ENCODE measurements at regions of chr11 and their contacts with region 1.

Region 1: GRCh38 chr11:60970369-60970774 is 1.1 kb upstream of the CD6 start:
- DNase-seq: peak; percentile 78 to 82 (median 80)
- H3K4me3 ChIP-seq: peak overlapping the region; percentile 38 to 92
- H3K4me3 Mint-ChIP-seq: peak overlapping the region; percentile 93 to 98 (median 96)
- H3K27ac ChIP-seq: peak overlapping the region; percentile 92
- H3K27ac Mint-ChIP-seq: peak overlapping the region; percentile 88 to 98 (median 96)
- H3K4me1 ChIP-seq: peaks cover 23% of the 10 kb centered on the region
- H3K4me1 Mint-ChIP-seq: peaks cover 18 to 38% (median 24%) of the 10 kb centered on the region in 4 donors
- H3K27me3 ChIP-seq: no peaks in the 10 kb centered on the region
- H3K27me3 Mint-ChIP-seq: peaks cover 0 to 1% of the 10 kb centered on the region in 2 donors

Region 2: GRCh38 chr11:60831143-60831500 is 139.2 kb before region 1 on chr11:
- CTCF ChIA-PET with region 1: interaction called, 18 read pairs
- POLR2A ChIA-PET with region 1: no interaction called
- intact Hi-C with region 1: no loop called
- DNase-seq: peak; percentile 68 to 77 (median 73)
- H3K4me3 ChIP-seq: no peak overlapping the region
- H3K4me3 Mint-ChIP-seq: peak overlapping the region in 2 of 8 donors; percentile 63 to 78
- H3K27ac ChIP-seq: no peak overlapping the region
- H3K27ac Mint-ChIP-seq: peak overlapping the region in 2 of 7 donors; percentile 83 to 93
- H3K4me1 ChIP-seq: no peaks in the 10 kb centered on the region
- H3K4me1 Mint-ChIP-seq: peaks cover 0 to 3% (median 0%) of the 10 kb centered on the region in 4 donors
- H3K27me3 ChIP-seq: no peaks in the 10 kb centered on the region
- H3K27me3 Mint-ChIP-seq: peaks cover 3 to 8% of the 10 kb centered on the region in 2 donors

Region 3: GRCh38 chr11:60992842-60993409 is 22.6 kb after region 1 on chr11:
- CTCF ChIA-PET with region 1: interaction called, 12 read pairs
- POLR2A ChIA-PET with region 1: no interaction called
- intact Hi-C with region 1: no loop called
- DNase-seq: peak in 1 of 5 donors; percentile 7
- H3K4me3 ChIP-seq: no peak overlapping the region
- H3K4me3 Mint-ChIP-seq: peak overlapping the region; percentile 34 to 81 (median 78)
- H3K27ac ChIP-seq: peak overlapping the region; percentile 51
- H3K27ac Mint-ChIP-seq: peak overlapping the region; percentile 84 to 96 (median 94)
- H3K4me1 ChIP-seq: peaks cover 92% of the 10 kb centered on the region
- H3K4me1 Mint-ChIP-seq: peaks cover 53 to 86% (median 72%) of the 10 kb centered on the region in 4 donors
- H3K27me3 ChIP-seq: no peaks in the 10 kb centered on the region
- H3K27me3 Mint-ChIP-seq: no peaks in the 10 kb centered on the region

Region 4: DNA sequence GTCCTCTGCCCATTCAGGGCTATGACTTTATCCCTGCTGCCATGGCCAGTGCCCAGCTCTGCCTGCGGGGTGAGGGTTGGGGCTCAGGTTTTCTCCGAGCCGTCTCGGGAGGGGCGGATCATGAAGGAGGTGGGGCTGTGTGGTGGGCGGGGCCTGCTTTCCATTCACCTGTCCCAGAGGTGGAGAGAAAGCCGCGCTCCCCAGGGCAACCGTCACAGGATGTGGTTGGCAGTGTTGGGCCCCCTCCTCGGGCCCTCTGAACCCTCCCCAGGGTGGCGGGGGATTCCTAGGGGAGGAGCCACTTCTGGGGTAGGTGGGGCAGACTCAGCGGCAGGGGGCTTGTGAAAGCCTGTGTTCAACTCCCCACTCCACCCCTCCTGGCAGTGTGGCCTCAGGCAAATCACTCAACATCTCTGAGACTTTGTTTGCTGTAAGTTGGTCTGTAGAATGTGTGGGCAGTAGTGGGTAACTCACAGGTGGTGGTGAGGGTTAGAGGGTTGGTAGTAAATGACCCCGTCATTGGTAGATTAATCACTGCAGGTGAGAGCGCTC is 51.4 kb after region 1 on chr11:
- CTCF ChIA-PET with region 1: interaction called, 12 read pairs
- POLR2A ChIA-PET with region 1: no interaction called
- intact Hi-C with region 1: loop called (anchors 1 kb)
- DNase-seq: peak; percentile 92 to 99 (median 94)
- H3K4me3 ChIP-seq: peak overlapping the region; percentile 40 to 41
- H3K4me3 Mint-ChIP-seq: peak overlapping the region; percentile 60 to 81 (median 72)
- H3K27ac ChIP-seq: peak overlapping the region; percentile 83
- H3K27ac Mint-ChIP-seq: peak overlapping the region; percentile 97 to 100 (median 99)
- H3K4me1 ChIP-seq: peaks cover 76% of the 10 kb centered on the region
- H3K4me1 Mint-ChIP-seq: peaks cover 60 to 85% (median 71%) of the 10 kb centered on the region in 4 donors
- H3K27me3 ChIP-seq: no peaks in the 10 kb centered on the region
- H3K27me3 Mint-ChIP-seq: no peaks in the 10 kb centered on the region

Region 5: GRCh38 chr11:61187505-61188130 is 217.2 kb after region 1 on chr11:
- CTCF ChIA-PET with region 1: no interaction called
- POLR2A ChIA-PET with region 1: interaction called, 3 read pairs
- intact Hi-C with region 1: loop called (anchors 1 kb)
- DNase-seq: peak; percentile 66 to 73 (median 71)
- H3K4me3 ChIP-seq: no peak overlapping the region
- H3K4me3 Mint-ChIP-seq: no peak overlapping the region
- H3K27ac ChIP-seq: no peak overlapping the region
- H3K27ac Mint-ChIP-seq: no peak overlapping the region
- H3K4me1 ChIP-seq: no peaks in the 10 kb centered on the region
- H3K4me1 Mint-ChIP-seq: peaks cover 0 to 3% (median 0%) of the 10 kb centered on the region in 4 donors
- H3K27me3 ChIP-seq: no peaks in the 10 kb centered on the region
- H3K27me3 Mint-ChIP-seq: peaks cover 3 to 9% of the 10 kb centered on the region in 2 donors